ENCODE measurements at regions of chr1 and their contacts with region 1.

Region 1: DNA sequence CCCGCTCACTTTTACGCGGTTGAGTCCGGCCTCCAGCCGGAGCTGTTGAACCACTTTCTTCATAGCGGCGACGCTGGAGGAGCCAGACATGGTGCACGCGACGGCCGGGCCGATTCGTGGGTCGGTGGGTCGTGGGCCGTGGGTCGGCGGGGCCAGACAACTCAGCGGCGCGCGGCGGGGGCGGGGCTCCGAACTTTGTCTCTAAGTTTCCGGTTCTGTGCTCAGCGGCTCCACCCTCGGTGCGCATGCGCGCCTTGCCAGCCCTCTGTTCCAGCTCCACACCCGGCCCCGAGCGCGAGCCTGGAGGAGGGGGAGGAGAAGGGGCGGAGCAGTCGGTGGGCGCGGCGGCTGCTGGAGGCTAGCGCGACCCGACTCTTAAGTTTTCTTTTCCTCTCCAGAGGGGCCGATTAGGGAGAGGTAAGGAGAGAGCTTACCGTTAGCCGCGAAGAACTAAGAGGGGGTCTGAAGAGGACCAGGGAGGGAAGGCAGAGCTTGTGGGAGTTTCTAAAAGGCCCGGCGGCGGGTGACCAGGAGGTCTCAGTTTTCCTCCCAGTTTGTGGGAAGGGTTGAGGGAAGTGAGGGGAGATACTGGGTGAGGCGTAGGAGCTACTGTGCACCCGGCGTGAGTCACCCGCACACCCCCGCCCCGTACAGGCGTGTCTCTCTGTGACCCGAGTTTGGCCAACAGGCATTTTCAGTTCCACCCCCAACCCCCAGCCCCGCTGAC is at the starts of genes GNG5 and SPATA1:
- DNase-seq: peak; percentile 91
- H3K4me3 ChIP-seq: peak within 1 kb of the TSS; percentile 76
- H3K27ac ChIP-seq: peak within 1 kb of the TSS; percentile 97
- H3K27me3 ChIP-seq: no peaks in the 10 kb centered on the region
- CTCF ChIP-seq: no peak
- polyA plus RNA-seq, gene GNG5: 124 and 136 TPM in 2 replicates
- polyA plus RNA-seq, gene SPATA1: 0.81 and 0.99 TPM in 2 replicates

Region 2: DNA sequence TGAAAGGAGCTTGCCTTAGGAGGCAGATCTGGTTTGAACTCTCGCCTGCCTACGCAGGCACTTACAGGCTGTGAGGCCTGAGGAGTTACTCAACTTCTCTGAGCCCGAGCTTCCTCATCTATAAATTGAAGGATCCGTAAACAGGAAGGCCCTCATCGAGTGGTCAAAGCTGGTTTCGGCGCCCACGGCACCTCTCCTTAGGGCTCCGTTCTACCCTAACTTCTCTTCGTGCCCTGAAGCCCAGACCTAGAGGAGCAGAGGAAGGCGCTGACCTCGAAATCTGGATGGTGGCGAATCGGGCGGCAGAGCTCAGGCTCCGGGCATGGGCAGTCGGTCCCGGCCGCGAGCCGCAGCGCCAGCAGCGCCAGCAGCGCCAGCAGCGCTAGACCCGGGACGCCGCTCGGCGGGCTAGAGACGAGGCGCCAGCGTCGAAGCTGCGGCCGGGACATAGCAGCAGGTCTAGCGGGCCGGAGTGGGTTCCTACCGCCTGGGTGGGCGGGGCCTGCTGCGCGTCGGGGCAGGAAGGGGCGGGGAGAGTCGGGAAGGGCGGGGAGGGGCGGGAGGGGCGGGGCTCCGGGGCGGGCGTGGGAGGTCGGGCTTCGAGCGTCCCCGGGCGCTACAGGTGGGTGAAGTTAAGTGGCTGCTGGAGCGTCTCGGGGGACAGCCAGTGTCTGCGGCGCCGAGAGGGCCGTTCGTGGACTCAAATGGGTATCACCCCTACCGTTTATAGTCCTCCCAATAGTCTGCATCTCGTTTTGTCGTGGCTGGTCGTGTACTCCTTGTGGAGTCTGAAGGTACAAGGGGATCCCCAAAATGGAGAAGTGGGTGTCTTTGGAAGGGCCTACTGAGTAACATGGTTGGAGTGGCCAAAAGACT is 68.0 kb after region 1 on chr1 and contains the start of gene CTBS:
- CTCF ChIA-PET with region 1: no interaction called
- POLR2A ChIA-PET with region 1: interaction called, 35 read pairs
- DNase-seq: peak; percentile 57
- H3K4me3 ChIP-seq: peak within 1 kb of the TSS; percentile 79
- H3K27ac ChIP-seq: peak within 1 kb of the TSS; percentile 98
- H3K27me3 ChIP-seq: no peaks in the 10 kb centered on the region
- CTCF ChIP-seq: no peak
- polyA plus RNA-seq, gene CTBS: 25.0 and 37.3 TPM in 2 replicates

Region 3: DNA sequence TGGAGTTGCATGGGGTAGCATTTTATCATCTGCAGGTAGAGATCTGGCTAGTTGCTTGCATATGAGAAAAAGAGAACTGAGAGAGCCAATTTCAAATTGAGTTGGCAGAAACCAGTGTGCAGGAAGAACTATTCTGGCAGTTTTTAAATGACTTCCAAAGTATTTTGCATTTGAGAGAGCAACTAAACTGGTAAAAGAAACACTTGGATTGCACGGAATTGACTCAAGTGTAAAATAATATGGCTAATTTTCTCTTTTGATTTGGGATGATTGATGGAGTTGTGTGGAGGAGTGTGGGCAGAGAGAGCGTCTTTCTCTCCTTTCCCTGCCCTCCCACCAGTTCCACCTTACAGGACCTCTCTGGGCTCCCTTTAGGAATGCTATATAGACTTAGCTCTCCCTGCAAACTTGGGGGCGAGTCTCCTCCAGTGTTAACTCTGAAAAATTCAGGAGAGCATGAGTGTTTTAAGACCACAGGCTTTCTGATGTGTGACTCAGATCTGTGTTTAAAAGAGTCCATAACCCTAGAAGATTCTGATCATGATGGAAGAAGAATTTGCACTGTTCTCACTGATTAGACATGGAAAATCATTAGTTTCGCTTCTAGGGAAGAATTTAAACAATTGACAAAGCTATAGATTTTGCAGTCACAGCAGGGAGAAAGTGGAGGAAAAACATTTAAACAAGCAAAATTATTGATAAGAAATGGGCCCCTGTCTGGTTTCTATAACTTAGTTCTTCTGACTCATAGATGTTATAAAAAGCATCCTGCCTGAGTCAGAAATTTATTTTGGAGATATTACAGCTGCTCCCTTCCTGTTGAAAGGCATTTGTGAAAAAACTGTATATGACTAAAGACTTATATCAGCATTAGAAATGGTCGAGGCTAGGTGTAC is 92.9 kb after region 1 on chr1:
- CTCF ChIA-PET with region 1: interaction called, 4 read pairs
- POLR2A ChIA-PET with region 1: interaction called, 10 read pairs
- DNase-seq: no peak
- H3K4me3 ChIP-seq: 0 out of 2 replicates have a peak overlapping the region, but pooled peaks have one; percentile 3
- H3K27ac ChIP-seq: peak overlapping the region; percentile 80
- H3K27me3 ChIP-seq: no peaks in the 10 kb centered on the region
- CTCF ChIP-seq: no peak

Measured in AG04450 (cell line).